A549 (cell line): ENCODE measurements at regions of chr17 and their contacts with region 1.

Region 1: DNA sequence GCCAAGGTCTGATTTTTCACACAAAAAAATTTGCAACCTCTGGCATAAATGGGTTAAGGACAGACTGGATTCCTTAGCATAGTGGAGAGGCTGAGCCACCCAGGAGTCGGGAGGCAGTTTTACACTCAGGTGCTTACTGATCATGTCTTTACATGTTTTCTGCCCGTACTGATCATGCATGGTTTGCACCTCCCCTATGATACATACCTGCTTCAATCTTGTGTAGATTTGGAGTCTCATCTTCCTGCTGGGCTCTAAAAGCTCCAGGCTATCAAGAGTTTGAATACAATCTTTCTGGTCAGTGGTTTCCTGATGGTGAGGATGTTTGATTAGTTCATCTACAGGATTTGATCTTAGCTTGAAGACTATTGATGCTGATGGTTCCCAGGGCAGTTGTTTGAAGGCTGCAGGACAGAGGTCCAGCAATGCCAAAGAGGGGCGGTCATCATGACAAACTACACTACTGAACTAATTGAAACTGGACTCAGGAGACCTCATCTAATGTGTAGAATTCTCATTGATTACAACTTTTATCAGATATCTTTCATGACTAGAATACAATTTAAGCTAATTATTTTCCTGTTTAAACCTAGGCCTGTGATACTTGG is 6.9 kb downstream of the C1QBP start:
- DNase-seq: no peak
- ATAC-seq: peak in 1 of 2 experiments; percentile 17; a peak in 1 of 6 replicates
- H3K4me3 ChIP-seq: no peak overlapping the region
- H3K27ac ChIP-seq: no peak overlapping the region
- H3K4me1 ChIP-seq: peaks cover 17% of the 10 kb centered on the region
- CTCF ChIP-seq: no peak
- EP300 ChIP-seq: no peak
- POLR2A ChIP-seq: no peak
- RAD21 ChIP-seq: no peak

Region 2: DNA sequence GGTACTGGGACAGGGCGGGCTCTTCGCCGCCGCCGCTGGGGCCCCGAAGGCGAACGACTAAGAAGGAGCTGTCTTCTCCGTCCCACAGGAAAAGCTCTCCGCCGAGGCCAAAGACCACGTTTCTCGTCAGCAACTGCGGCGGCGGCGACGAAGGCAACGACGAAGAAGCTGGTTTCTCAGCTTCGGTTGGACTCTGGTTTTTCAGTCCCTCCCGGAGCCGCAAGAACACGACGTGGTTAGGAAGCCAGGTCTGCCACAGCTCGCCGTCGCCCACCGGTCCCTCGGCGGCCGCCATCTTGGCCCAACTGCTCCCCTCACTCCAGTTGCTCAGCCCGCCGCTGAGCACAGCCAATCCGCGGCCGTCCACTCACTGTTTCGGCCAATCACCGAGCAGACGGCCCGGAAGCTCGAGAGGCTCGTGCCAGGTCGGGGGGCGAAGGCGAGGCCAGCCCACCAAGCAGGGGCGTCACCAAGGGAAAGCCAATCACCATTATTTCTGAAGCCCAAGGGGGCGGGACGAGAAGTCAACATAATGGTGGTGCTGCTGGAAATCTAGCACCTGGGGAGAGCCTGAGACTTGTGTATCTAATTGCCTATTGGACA is 12.6 kb before region 1 on chr17 and contains the start of gene NUP88:
- CTCF ChIA-PET with region 1: interaction called, 178 read pairs
- POLR2A ChIA-PET with region 1: interaction called, 18 read pairs
- DNase-seq: peak; percentile 98 to 99
- ATAC-seq: peak; percentile 96 to 98
- H3K4me3 ChIP-seq: peak within 1 kb of the TSS; percentile 78
- H3K27ac ChIP-seq: peak within 1 kb of the TSS; percentile 89 to 90
- H3K4me1 ChIP-seq: peaks cover 40% of the 10 kb centered on the region
- CTCF ChIP-seq: no peak
- EP300 ChIP-seq: no peak
- POLR2A ChIP-seq: peak; percentile 98
- RAD21 ChIP-seq: no peak
- polyA plus RNA-seq, gene NUP88: 175 and 180 TPM in 2 replicates

Region 3: DNA sequence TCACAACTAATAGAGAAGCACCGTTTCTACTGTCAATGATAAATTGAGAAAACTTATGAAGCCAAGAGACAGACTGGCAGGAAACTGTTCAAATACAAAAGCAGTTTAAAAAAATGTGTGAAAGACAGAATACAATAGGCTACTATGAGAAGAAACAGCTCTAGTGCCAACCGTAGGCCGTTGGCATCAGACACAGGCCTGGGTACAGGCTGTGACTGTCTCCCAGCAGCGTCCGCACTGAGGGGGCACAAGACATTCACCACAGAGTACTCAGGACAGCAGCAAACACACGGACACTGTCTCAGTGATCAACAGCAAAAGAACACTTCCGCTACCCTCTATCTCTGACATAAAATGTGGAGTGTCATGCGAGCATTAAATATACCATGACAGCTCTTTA is 14.7 kb after region 1 on chr17:
- CTCF ChIA-PET with region 1: interaction called, 178 read pairs
- POLR2A ChIA-PET with region 1: no interaction called
- DNase-seq: no peak
- ATAC-seq: no peak
- H3K4me3 ChIP-seq: no peak overlapping the region
- H3K27ac ChIP-seq: no peak overlapping the region
- H3K4me1 ChIP-seq: no peaks in the 10 kb centered on the region
- CTCF ChIP-seq: no peak
- EP300 ChIP-seq: no peak
- POLR2A ChIP-seq: no peak
- RAD21 ChIP-seq: no peak